MCF 10A (cell line): ENCODE measurements at regions of chr9 and their contacts with region 1.

Region 1: DNA sequence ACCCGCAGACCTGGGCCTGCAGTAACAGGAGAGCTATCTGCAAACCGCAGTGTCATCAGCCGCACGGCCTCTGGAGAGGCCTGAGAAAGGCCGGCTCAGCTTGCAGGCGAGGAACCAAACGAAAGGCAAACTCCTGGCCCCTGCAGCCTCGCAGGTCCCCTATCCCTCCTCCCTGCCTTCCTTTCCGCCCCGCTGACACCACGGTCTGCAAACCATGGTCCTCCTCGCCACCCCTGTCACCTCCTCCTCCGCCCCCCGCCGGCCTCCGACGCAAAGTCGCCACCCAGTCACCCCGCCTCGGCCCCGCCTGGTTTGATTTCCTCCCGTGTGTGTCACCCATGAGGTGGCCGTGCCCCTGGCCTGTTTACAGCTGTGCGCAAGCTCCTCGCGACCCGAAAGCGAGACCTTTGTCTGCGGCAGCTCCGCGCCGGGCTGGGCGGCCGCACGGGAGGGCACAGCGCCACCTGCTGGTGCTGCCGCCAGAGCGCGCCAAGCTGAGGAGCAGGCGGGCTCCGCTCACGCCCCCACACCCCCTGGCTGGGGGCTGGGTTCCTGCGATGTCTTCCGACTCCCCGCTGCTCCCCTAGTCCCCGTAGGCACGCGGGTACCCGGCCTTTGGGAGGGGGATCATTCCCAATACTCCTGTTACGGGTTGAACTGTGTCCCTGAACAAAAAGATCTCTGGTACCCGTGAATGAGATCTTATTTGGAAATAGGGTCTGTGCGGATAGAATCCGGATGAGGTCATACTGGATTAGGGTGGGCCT is 19.4 kb downstream of the GBGT1 start:
- DNase-seq: peak; percentile 53
- H3K4me3 Mint-ChIP-seq: peak overlapping the region; percentile 57
- H3K27ac Mint-ChIP-seq: no peak overlapping the region
- H3K4me1 Mint-ChIP-seq: peaks cover 24% of the 10 kb centered on the region
- H3K27me3 Mint-ChIP-seq: no peaks in the 10 kb centered on the region
- CTCF ChIP-seq: peak; percentile 98

Region 2: DNA sequence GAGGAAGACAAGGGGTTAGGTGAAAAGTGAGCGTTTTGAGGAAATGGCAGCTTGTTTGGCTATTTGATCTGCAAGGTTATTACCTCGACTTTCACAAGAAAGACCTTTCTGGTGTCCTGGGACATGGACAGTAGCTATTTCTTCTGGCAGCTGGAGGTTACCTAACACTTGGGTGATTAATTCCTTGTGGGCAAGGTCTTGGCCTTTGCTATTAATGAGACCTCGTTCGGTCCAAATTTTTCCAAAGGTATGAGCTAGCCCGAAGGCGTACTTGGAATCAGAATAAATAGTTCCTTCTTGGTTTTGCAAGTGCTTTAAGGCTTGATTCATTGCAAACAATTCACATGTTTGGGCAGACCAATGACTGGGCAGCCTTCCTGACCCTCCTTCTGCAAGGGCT is 108.7 kb before region 1 on chr9:
- CTCF ChIA-PET with region 1: interaction called, 19 read pairs
- POLR2A ChIA-PET with region 1: interaction called, 33 read pairs
- intact Hi-C with region 1: loop called (anchors 5 kb)
- DNase-seq: peak; percentile 33
- H3K4me3 Mint-ChIP-seq: no peak overlapping the region
- H3K27ac Mint-ChIP-seq: no peak overlapping the region
- H3K4me1 Mint-ChIP-seq: peaks cover 29% of the 10 kb centered on the region
- H3K27me3 Mint-ChIP-seq: no peaks in the 10 kb centered on the region
- CTCF ChIP-seq: no peak

Region 3: GRCh38 chr9:133042676-133043075 is 101.6 kb before region 1 on chr9:
- CTCF ChIA-PET with region 1: interaction called, 13 read pairs
- POLR2A ChIA-PET with region 1: no interaction called
- intact Hi-C with region 1: no loop called
- DNase-seq: no peak
- H3K4me3 Mint-ChIP-seq: no peak overlapping the region
- H3K27ac Mint-ChIP-seq: no peak overlapping the region
- H3K4me1 Mint-ChIP-seq: no peaks in the 10 kb centered on the region
- H3K27me3 Mint-ChIP-seq: no peaks in the 10 kb centered on the region
- CTCF ChIP-seq: no peak

Region 4: DNA sequence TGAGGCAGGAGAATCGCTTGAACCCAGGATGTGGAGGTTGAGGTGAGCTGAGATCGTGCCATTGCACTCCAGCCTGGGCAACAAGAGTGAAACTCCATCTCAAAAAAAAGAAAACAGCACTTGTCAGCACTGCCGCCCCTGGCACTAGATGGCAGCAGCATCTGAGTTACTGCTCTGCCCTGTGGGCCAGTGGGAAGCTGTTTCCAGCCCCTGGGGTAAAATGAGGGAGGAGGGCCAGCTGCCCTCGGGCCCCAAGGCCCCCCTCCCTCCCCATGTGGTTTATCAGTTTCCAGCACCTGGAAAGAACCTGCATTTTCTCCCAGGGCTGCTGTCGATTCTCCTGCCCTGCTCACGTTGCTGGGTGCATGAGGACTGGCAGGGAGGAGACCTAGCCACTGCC is 95.8 kb before region 1 on chr9:
- CTCF ChIA-PET with region 1: interaction called, 13 read pairs
- POLR2A ChIA-PET with region 1: interaction called, 5 read pairs
- intact Hi-C with region 1: loop called (anchors 1 kb)
- DNase-seq: no peak
- H3K4me3 Mint-ChIP-seq: no peak overlapping the region
- H3K27ac Mint-ChIP-seq: no peak overlapping the region
- H3K4me1 Mint-ChIP-seq: no peaks in the 10 kb centered on the region
- H3K27me3 Mint-ChIP-seq: no peaks in the 10 kb centered on the region
- CTCF ChIP-seq: peak; percentile 36

Region 5: DNA sequence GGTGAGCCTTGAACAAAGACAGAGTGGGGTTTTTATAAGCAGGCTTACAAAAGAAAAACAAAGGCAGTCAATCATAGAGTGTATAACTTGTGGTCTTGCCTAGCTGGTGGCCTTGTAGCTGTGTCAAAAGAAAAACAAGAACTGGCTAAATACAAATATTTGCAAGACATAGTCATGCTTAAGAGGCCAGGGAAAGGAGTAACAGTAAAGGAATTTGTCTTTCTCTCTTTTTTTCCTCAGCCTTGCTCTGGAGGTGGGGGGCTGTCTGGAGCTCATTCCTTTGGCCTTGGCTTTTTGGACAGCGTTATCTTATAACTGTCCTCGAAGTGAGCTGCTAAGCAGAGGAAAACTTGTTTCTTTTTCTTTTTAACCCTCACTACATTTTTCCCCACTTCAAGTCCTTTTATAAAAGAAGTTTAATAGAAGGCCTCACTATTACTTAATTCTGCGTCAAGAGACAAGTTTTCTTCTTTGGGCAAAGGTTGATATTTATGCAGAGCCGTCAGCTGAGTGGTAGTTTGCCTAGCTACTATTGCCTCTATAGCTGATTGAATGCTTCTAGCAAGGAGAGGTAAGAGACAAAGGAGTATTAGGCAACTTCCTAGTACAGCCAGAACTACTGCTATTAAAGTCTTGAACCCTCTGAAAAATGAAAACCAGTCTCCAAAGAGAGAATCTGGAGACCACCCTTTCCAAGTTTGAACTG is 68.2 kb before region 1 on chr9:
- CTCF ChIA-PET with region 1: interaction called, 13 read pairs
- POLR2A ChIA-PET with region 1: no interaction called
- intact Hi-C with region 1: no loop called
- DNase-seq: peak; percentile 20
- H3K4me3 Mint-ChIP-seq: no peak overlapping the region
- H3K27ac Mint-ChIP-seq: no peak overlapping the region
- H3K4me1 Mint-ChIP-seq: peaks cover 10% of the 10 kb centered on the region
- H3K27me3 Mint-ChIP-seq: peaks cover 14% of the 10 kb centered on the region
- CTCF ChIP-seq: no peak

Region 6: GRCh38 chr9:133115448-133116345 is 28.6 kb before region 1 on chr9:
- CTCF ChIA-PET with region 1: interaction called, 183 read pairs
- POLR2A ChIA-PET with region 1: interaction called, 15 read pairs
- intact Hi-C with region 1: loop called (anchors 2 kb)
- DNase-seq: no peak
- H3K4me3 Mint-ChIP-seq: no peak overlapping the region
- H3K27ac Mint-ChIP-seq: no peak overlapping the region
- H3K4me1 Mint-ChIP-seq: peaks cover 15% of the 10 kb centered on the region
- H3K27me3 Mint-ChIP-seq: no peaks in the 10 kb centered on the region
- CTCF ChIP-seq: no peak

Region 7: DNA sequence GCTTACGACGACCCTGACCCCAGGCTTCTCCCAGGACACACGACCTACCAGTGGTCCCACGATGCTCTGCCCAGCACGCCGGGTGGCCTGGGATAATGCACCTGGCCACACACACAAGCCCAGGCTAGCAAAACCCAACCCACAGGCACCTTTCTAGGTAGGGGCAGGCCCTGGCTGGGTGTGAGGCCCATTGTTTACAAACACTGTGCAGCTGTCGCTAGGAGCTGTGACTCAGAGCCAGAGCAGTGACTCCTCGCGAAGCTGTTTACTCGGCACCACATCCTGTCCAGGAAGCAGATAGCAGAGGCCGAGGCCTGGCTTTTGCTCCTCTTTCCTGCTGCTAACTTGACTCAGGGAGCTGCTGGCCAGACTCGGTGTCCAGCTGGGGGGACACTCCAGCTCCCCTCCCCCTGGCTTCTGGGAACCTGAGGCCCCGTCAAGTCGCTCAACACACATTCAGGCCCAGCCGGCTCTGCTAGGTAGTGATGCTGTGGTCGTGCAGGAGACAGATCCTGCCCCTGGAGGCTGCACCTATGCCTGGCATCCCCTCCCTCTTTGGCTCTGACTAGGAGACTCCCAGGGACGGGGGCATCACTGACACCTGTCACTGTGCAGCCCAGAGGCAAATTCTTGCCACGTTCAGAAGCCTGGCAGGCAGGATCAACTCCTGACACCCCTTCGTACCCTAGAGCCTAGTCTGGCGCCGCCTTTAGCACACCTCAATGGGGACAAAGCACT is 10.5 kb before region 1 on chr9:
- CTCF ChIA-PET with region 1: interaction called, 119 read pairs
- POLR2A ChIA-PET with region 1: interaction called, 53 read pairs
- intact Hi-C with region 1: no loop called
- DNase-seq: peak; percentile 98
- H3K4me3 Mint-ChIP-seq: peak overlapping the region; percentile 44
- H3K27ac Mint-ChIP-seq: peak overlapping the region; percentile 98
- H3K4me1 Mint-ChIP-seq: peaks cover 27% of the 10 kb centered on the region
- H3K27me3 Mint-ChIP-seq: no peaks in the 10 kb centered on the region
- CTCF ChIP-seq: no peak

Region 8: GRCh38 chr9:133257465-133257956 is 113.2 kb after region 1 on chr9:
- CTCF ChIA-PET with region 1: no interaction called
- POLR2A ChIA-PET with region 1: no interaction called
- intact Hi-C with region 1: no loop called
- DNase-seq: no peak
- H3K4me3 Mint-ChIP-seq: no peak overlapping the region
- H3K27ac Mint-ChIP-seq: no peak overlapping the region
- H3K4me1 Mint-ChIP-seq: no peaks in the 10 kb centered on the region
- H3K27me3 Mint-ChIP-seq: no peaks in the 10 kb centered on the region
- CTCF ChIP-seq: no peak